Activated CD4-positive, alpha-beta memory T cell treated with anti-CD3 and anti-CD28 coated beads, Interleukin-2, amount 10 ng/mL, durations not matched to agents 7 days and 5 days (primary cell): ENCODE measurements at regions of chr12 and their contacts with region 1.

Region 1: GRCh38 chr12:93419388-93420034 is 22.2 kb downstream of the UBE2N start:
- DNase-seq: no peak
- H3K4me3 Mint-ChIP-seq: no peak overlapping the region
- H3K27ac Mint-ChIP-seq: no peak overlapping the region
- H3K4me1 Mint-ChIP-seq: peaks cover 83% of the 10 kb centered on the region
- H3K27me3 Mint-ChIP-seq: no peaks in the 10 kb centered on the region

Region 2: GRCh38 chr12:93378373-93379325 is 40.9 kb before region 1 on chr12:
- CTCF ChIA-PET with region 1: interaction called, 12 read pairs
- POLR2A ChIA-PET with region 1: interaction called, 6 read pairs
- DNase-seq: peak; percentile 68
- H3K4me3 Mint-ChIP-seq: peak overlapping the region; percentile 100
- H3K27ac Mint-ChIP-seq: peak overlapping the region; percentile 100
- H3K4me1 Mint-ChIP-seq: peaks cover 34% of the 10 kb centered on the region
- H3K27me3 Mint-ChIP-seq: peaks cover 2% of the 10 kb centered on the region

Region 3: DNA sequence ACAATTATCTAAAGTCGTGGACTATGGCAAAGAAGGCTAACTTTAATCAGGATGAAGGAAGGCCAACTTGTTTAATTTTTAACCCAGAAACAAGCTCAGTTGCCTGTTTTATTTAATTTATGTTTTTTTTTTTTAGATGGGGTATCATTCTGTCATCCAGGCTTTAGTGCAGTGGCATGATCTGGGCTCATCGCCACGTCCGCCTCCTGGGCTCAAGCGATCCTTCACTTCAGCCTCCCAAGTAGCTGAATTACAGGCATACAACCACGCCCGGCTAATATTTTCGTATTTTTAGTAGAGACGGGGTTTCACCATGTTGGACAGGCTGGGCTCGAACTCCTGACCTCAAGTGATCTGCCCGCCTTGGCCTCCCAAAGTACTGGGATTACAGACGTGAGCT is 22.1 kb before region 1 on chr12:
- CTCF ChIA-PET with region 1: interaction called, 26 read pairs
- POLR2A ChIA-PET with region 1: interaction called, 11 read pairs
- DNase-seq: no peak
- H3K4me3 Mint-ChIP-seq: no peak overlapping the region
- H3K27ac Mint-ChIP-seq: no peak overlapping the region
- H3K4me1 Mint-ChIP-seq: peaks cover 1% of the 10 kb centered on the region
- H3K27me3 Mint-ChIP-seq: no peaks in the 10 kb centered on the region

Region 4: GRCh38 chr12:93403988-93404803 is 15.3 kb before region 1 on chr12:
- CTCF ChIA-PET with region 1: interaction called, 14 read pairs
- POLR2A ChIA-PET with region 1: interaction called, 11 read pairs
- DNase-seq: no peak
- H3K4me3 Mint-ChIP-seq: no peak overlapping the region
- H3K27ac Mint-ChIP-seq: no peak overlapping the region
- H3K4me1 Mint-ChIP-seq: peaks cover 15% of the 10 kb centered on the region
- H3K27me3 Mint-ChIP-seq: no peaks in the 10 kb centered on the region

Region 5: GRCh38 chr12:93441617-93442410 is 22.3 kb after region 1 on chr12 and contains the start of gene UBE2N:
- CTCF ChIA-PET with region 1: interaction called, 39 read pairs
- POLR2A ChIA-PET with region 1: interaction called, 12 read pairs
- DNase-seq: peak; percentile 96
- H3K4me3 Mint-ChIP-seq: peak within 1 kb of the TSS; percentile 97
- H3K27ac Mint-ChIP-seq: peak within 1 kb of the TSS; percentile 95
- H3K4me1 Mint-ChIP-seq: peaks cover 46% of the 10 kb centered on the region
- H3K27me3 Mint-ChIP-seq: no peaks in the 10 kb centered on the region
- total RNA-seq, gene UBE2N: 159 to 170 TPM

Region 6: DNA sequence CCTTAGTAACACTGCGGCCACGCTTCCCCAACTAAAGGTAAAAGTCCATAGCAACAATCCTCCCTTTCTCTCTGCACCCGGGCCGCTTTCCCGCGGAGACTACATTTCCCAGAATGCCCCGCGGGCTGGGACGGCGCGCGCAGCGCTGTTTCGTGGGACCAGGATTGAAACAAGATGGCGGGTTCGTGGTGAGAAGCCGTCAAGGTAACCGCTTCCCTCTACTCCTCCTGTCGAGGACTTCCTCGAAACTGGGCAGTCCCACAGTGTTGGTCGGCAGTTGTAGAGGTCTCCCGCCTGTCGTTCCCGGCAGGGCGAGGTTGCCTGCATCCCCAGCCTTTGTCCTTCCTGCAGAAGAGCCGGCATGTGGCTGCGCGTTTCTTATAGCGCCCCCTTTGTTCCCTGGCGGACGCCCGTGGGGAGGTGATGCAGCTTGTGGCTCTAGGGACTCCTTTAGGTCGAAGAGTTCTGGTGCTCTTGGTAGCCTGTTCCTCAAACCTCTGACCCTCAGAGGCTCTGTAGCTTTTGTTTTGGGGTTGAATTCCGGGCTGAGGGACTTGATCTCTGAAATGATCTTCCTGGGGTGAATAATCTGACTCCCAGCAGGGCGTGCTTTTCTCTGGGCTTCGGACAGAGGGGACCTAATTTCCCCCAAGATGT is 48.0 kb after region 1 on chr12 and contains the start of gene MRPL42:
- CTCF ChIA-PET with region 1: interaction called, 10 read pairs
- POLR2A ChIA-PET with region 1: no interaction called
- DNase-seq: peak; percentile 94
- H3K4me3 Mint-ChIP-seq: peak within 1 kb of the TSS; percentile 94
- H3K27ac Mint-ChIP-seq: peak within 1 kb of the TSS; percentile 88
- H3K4me1 Mint-ChIP-seq: peaks cover 31% of the 10 kb centered on the region
- H3K27me3 Mint-ChIP-seq: no peaks in the 10 kb centered on the region
- total RNA-seq, gene MRPL42: 57.2 to 58.0 TPM